ENCODE measurements at regions of chrX and their contacts with region 1.

Region 1: GRCh38 chrX:102599951-102600579 is 750 bp downstream of the ARMCX5 start:
- DNase-seq: no peak
- ATAC-seq: peak in 3 of 4 donors; percentile 34 to 66 (median 49)
- H3K4me3 ChIP-seq: peak overlapping the region; percentile 75
- H3K27ac ChIP-seq: peak overlapping the region; percentile 67
- H3K4me1 ChIP-seq: no peaks in the 10 kb centered on the region
- H3K27me3 ChIP-seq: no peaks in the 10 kb centered on the region
- CTCF ChIP-seq: no peak

Region 2: DNA sequence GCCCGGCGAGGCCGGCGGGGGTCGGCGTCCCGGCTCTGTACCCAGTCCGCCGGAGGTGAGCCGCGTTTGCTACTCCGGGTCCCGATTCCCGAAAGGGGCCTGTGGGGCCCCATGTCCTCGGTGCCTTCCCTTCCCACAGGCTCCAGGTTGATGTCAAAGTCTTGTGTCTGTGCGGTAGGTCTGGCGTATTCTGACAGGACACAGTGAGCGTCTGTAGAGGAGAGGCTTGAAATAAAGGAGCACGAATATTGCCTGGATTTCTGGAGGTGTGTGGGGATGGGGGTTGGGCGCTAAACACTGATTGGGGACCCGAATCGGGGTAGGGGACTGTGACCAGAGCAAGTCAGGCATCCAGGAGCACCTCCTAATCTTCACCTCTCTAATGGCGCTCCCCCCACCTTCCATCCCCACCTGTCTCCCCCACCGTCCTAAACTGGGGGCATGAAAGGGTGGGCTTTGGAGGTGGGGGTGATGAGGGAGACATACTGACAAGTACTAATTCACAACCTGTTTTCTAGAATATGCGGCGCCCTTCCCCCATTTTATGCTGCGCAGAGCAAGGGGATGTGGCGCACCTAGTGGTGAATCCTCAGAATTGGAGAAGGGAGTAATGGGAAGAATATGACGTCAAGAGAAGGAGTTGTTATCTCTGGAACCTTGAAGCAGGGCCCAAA is 113.0 kb after region 1 on chrX:
- intact Hi-C with region 1: loop called in 1 of 2 experiments (anchors 10 kb)
- DNase-seq: peak; percentile 36 to 51
- ATAC-seq: peak; percentile 74 to 86 (median 78)
- H3K4me3 ChIP-seq: peak overlapping the region; percentile 74
- H3K27ac ChIP-seq: peak overlapping the region; percentile 58
- H3K4me1 ChIP-seq: no peaks in the 10 kb centered on the region
- H3K27me3 ChIP-seq: peaks cover 0 to 17% (median 0%) of the 10 kb centered on the region in 3 donors
- CTCF ChIP-seq: peak; percentile 39

Measured in psoas muscle (tissue), 8 donors.